CD8-positive, alpha-beta memory T cell (primary cell): ENCODE measurements at regions of chr11 and their contacts with region 1.

Region 1: DNA sequence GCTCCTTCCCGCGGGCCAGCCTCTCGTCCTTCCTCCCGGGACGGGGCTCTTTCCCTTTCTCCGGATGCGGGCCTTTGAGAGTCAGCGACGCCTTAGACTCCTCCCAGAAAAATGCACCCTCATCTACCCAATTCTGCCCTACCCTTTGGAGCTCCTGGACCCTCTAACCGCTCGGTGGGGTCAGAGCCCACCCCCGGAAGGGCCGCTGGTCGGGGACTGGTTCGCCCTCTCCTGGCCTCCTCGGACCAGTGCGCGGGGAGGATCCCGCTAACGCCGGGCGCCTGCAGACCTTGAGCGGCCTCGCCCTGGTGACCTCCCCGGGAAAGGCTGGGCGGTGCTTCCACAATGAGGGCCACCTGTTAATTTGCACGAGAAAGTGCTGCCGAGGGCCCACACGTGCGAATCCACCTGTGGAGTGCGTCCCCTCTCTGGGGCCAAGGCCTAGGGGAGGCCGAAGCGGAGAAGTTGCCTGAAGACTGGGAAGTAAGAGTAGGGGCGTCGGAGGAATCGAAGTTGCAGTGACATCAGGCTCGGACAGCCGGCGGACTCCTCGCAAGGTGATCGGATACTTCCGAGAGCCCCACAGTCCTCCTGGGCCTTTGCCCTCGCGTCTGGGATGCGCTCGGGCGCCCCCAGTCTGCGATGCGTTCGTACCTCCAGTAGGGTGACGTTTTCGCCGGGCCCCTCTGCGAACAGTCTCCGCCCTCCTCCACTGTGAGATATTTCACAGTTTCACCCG is 61.5 kb downstream of the ENDOD1 start:
- DNase-seq: peak; percentile 86 to 95 (median 90)
- H3K4me3 ChIP-seq: peak overlapping the region; percentile 68
- H3K4me3 Mint-ChIP-seq: peak overlapping the region; percentile 86 to 95 (median 93)
- H3K27ac ChIP-seq: peak overlapping the region; percentile 60
- H3K27ac Mint-ChIP-seq: peak overlapping the region; percentile 90 to 99 (median 97)
- H3K4me1 ChIP-seq: peaks cover 26% of the 10 kb centered on the region
- H3K4me1 Mint-ChIP-seq: peaks cover 31 to 45% (median 34%) of the 10 kb centered on the region in 3 donors
- H3K27me3 ChIP-seq: no peaks in the 10 kb centered on the region
- H3K27me3 Mint-ChIP-seq: peaks cover 2 to 3% of the 10 kb centered on the region in 2 donors

Region 2: GRCh38 chr11:95089620-95090542 is 61.2 kb before region 1 on chr11 and contains the start of gene ENDOD1:
- CTCF ChIA-PET with region 1: interaction called, 18 read pairs
- POLR2A ChIA-PET with region 1: interaction called, 25 read pairs
- DNase-seq: peak; percentile 75 to 89 (median 84)
- H3K4me3 ChIP-seq: peak within 1 kb of the TSS; percentile 70
- H3K4me3 Mint-ChIP-seq: peak within 1 kb of the TSS; percentile 91 to 98 (median 93)
- H3K27ac ChIP-seq: peak within 1 kb of the TSS; percentile 78
- H3K27ac Mint-ChIP-seq: peak within 1 kb of the TSS; percentile 92 to 99 (median 98)
- H3K4me1 ChIP-seq: peaks cover 33% of the 10 kb centered on the region
- H3K4me1 Mint-ChIP-seq: peaks cover 46 to 58% (median 48%) of the 10 kb centered on the region in 3 donors
- H3K27me3 ChIP-seq: no peaks in the 10 kb centered on the region
- H3K27me3 Mint-ChIP-seq: no peaks in the 10 kb centered on the region
- total RNA-seq, gene ENDOD1: 29.6 to 30.1 TPM

Region 3: GRCh38 chr11:95111923-95112540 is 39.1 kb before region 1 on chr11:
- CTCF ChIA-PET with region 1: no interaction called
- POLR2A ChIA-PET with region 1: no interaction called
- DNase-seq: no peak
- H3K4me3 ChIP-seq: no peak overlapping the region
- H3K4me3 Mint-ChIP-seq: no peak overlapping the region
- H3K27ac ChIP-seq: no peak overlapping the region
- H3K27ac Mint-ChIP-seq: peak overlapping the region in 2 of 8 donors; percentile 25 to 36
- H3K4me1 ChIP-seq: no peaks in the 10 kb centered on the region
- H3K4me1 Mint-ChIP-seq: peaks cover 7 to 24% (median 20%) of the 10 kb centered on the region in 3 donors
- H3K27me3 ChIP-seq: no peaks in the 10 kb centered on the region
- H3K27me3 Mint-ChIP-seq: peaks cover 0 to 2% of the 10 kb centered on the region in 2 donors

Region 4: DNA sequence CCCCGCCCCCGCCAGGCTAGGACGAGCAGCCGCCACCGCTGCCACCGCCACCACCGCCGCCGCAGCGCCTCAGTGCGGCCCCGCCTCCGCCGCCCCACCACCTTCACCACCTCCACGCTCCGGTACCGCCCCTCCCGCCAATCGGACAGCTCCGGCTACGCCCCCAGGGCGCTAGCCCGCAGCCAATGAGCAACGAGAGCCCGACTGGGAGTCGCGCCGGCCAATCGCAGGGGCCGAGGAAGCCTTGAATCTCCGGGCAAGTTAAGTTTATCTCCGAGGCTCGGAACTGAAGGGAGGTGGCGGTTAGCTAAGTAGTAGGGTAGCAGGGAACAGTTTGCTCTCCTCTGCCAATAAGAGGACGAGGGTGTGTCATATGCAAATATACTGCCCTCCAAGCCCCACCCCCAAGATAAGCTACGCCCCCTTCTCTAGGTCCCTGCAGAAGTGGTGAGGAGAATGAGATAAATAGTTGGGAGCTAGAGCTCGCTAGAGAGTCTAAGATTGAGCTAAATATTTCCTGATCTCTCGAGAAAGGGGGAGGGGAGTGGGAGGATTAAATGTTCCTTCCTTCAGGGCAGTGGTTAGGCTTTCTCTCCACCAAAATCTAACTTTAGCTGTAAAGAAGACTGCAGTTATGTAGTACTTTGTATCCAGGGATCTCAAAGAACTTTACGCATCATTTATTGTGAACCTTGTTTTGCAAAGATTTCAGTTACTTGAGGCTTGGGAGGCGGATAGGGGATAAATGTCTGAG is 80.2 kb after region 1 on chr11 and contains the start of gene SESN3:
- CTCF ChIA-PET with region 1: interaction called, 22 read pairs
- POLR2A ChIA-PET with region 1: interaction called, 11 read pairs
- DNase-seq: peak; percentile 98 to 99 (median 99)
- H3K4me3 ChIP-seq: peak within 1 kb of the TSS; percentile 68
- H3K4me3 Mint-ChIP-seq: peak within 1 kb of the TSS in 6 of 7 donors; percentile 90 to 97 (median 94)
- H3K27ac ChIP-seq: peak within 1 kb of the TSS; percentile 60
- H3K27ac Mint-ChIP-seq: peak within 1 kb of the TSS; percentile 83 to 98 (median 89)
- H3K4me1 ChIP-seq: peaks cover 24% of the 10 kb centered on the region
- H3K4me1 Mint-ChIP-seq: peaks cover 41 to 50% (median 49%) of the 10 kb centered on the region in 3 donors
- H3K27me3 ChIP-seq: no peaks in the 10 kb centered on the region
- H3K27me3 Mint-ChIP-seq: no peaks in the 10 kb centered on the region
- total RNA-seq, gene SESN3: 18.8 to 19.7 TPM

Region 5: GRCh38 chr11:95577716-95578460 is 426.8 kb after region 1 on chr11:
- CTCF ChIA-PET with region 1: no interaction called
- POLR2A ChIA-PET with region 1: interaction called, 12 read pairs
- DNase-seq: no peak
- H3K4me3 ChIP-seq: no peak overlapping the region
- H3K4me3 Mint-ChIP-seq: no peak overlapping the region
- H3K27ac ChIP-seq: no peak overlapping the region
- H3K27ac Mint-ChIP-seq: no peak overlapping the region
- H3K4me1 ChIP-seq: no peaks in the 10 kb centered on the region
- H3K4me1 Mint-ChIP-seq: no peaks in the 10 kb centered on the region
- H3K27me3 ChIP-seq: no peaks in the 10 kb centered on the region
- H3K27me3 Mint-ChIP-seq: peaks cover 0 to 2% of the 10 kb centered on the region in 2 donors

Region 6: DNA sequence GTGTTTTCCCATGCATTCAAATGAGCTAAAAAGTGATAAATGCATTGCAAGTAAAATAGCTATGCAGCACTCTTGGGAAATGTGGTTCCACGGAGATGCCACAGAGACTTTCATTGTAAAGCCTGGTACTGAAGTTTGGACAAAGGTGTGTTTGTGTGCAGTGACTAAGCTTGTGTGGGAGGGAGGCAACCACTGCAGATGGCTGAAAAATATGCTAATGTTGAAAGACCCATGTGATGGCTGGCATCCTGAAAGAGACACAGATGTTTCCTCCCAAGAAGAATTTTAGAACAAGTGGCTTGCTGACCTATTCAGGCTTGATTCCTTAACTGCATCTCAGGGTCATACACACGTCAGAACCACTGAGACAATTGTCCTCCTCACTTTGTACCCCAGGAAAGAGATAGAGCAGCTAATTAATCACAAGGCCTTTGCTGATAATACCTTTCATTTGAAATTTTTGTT is 564.7 kb after region 1 on chr11:
- CTCF ChIA-PET with region 1: interaction called, 14 read pairs
- POLR2A ChIA-PET with region 1: no interaction called
- DNase-seq: no peak
- H3K4me3 ChIP-seq: no peak overlapping the region
- H3K4me3 Mint-ChIP-seq: peak overlapping the region in 1 of 7 donors; percentile 14
- H3K27ac ChIP-seq: no peak overlapping the region
- H3K27ac Mint-ChIP-seq: peak overlapping the region in 4 of 8 donors; percentile 16 to 41 (median 28)
- H3K4me1 ChIP-seq: peaks cover 15% of the 10 kb centered on the region
- H3K4me1 Mint-ChIP-seq: peaks cover 14 to 36% (median 23%) of the 10 kb centered on the region in 3 donors
- H3K27me3 ChIP-seq: no peaks in the 10 kb centered on the region
- H3K27me3 Mint-ChIP-seq: peaks cover 2 to 18% of the 10 kb centered on the region in 2 donors

Region 7: DNA sequence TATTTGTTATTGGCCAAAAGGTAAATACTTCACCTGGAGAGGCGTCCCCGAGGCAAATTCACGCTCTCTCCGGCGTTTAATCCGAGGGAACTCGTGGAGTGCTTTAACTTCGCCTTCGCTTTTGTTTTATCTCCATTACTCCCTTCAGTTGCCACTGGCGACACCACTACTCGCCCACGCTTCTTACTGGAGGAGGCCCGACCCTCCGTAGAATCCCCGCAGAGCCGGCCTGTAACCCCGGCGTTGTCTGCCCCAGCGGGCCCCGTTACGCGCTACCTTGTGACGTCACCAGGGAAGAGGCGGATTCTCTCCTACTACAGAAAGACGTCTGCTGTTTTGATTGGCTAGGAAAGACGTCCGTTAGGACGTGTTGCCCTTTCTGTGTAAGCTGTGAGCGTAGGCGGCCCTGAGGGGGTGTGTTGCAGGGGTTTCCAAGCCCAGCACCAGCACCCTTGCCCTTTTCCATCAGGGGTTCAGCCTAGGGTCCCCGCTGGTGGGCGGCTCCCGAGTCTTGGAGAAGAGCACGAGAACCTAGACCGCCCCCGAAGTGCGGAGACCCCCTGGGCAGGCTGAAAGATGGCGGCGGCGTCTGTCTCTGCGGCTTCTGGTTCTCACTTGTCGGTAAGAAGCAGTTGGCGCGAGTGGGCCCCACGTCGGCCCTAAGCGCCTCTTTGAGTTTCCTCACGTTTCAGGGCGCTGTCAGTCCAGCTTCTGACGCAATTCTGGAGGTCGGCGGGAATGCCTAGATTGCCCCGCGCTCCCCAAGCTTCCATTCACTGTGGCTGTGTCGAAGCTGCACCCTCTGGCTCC is 639.2 kb after region 1 on chr11 and contains the start of gene CEP57:
- CTCF ChIA-PET with region 1: interaction called, 33 read pairs
- POLR2A ChIA-PET with region 1: interaction called, 15 read pairs
- DNase-seq: peak; percentile 85 to 96 (median 96)
- H3K4me3 ChIP-seq: peak within 1 kb of the TSS; percentile 97
- H3K4me3 Mint-ChIP-seq: peak within 1 kb of the TSS; percentile 98 to 100 (median 99)
- H3K27ac ChIP-seq: peak within 1 kb of the TSS; percentile 100
- H3K27ac Mint-ChIP-seq: peak within 1 kb of the TSS; percentile 100
- H3K4me1 ChIP-seq: peaks cover 33% of the 10 kb centered on the region
- H3K4me1 Mint-ChIP-seq: peaks cover 52 to 76% (median 72%) of the 10 kb centered on the region in 3 donors
- H3K27me3 ChIP-seq: no peaks in the 10 kb centered on the region
- H3K27me3 Mint-ChIP-seq: peaks cover 0 to 7% of the 10 kb centered on the region in 2 donors
- total RNA-seq, gene CEP57: 63.7 to 64.4 TPM